Activated CD4-positive, alpha-beta memory T cell treated with anti-CD3 and anti-CD28 coated beads, Interleukin-2, amount 10 ng/mL, durations not matched to agents 7 days and 5 days (primary cell): ENCODE measurements at regions of chr12 and their contacts with region 1.

Region 1: DNA sequence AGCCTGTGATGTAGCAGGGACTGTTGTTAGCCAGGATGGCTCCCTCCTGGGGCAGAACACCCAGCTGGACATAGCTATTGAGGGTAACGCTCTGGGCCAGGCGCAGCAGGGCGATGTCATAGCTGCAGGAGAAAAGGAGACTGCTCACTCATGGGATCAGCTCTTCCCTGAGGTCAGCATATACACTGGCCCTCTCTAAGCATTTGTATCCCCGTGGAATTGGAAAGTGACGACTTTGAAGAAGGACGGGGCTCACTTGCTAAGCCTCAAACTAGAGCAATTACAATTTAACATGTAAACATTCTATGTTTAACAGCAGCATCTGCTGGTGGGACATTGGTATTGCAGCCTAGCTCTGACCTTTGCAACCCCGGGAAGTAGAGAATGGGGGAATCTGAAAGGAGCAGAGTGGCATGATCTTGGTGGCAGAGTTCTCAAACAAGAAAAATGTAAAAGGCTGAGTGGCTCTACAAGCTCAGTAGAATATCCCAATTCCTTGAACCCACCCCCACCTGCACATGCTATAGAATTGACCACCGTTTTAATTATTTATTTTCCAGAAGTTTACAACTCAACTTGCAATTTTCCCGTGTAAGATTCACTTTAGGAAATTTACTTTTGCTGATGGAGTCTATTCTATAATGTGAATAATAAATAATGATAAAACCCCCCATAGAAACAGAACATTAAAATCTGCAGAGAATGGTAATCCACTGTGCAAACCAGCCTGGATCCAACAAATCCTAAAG is 5.0 kb downstream of the CELA1 start:
- DNase-seq: peak; percentile 76
- H3K4me3 Mint-ChIP-seq: no peak overlapping the region
- H3K27ac Mint-ChIP-seq: no peak overlapping the region
- H3K4me1 Mint-ChIP-seq: peaks cover 11% of the 10 kb centered on the region
- H3K27me3 Mint-ChIP-seq: no peaks in the 10 kb centered on the region

Region 2: DNA sequence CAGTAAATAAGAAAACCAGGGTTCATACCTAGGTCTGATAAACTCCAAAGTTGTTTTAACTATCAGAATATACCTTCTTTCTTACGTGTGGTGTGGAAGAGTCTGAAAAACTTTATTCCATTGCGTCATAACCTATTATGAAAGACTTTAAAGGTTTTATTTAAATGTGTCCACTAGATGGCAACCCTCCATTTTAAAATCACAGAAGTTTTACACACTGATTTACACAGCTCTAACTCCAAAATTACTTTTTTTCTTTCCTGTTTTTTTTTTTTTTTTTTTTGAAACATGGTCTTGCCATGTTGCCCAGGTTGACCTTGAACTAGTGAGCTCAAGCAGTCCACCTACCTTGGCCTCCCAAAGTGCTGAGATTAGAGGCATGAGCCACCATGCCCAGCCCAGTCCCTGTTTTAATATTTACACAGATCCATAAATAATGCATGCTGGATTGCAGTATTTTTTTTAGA is 516.0 kb before region 1 on chr12:
- CTCF ChIA-PET with region 1: interaction called, 27 read pairs
- POLR2A ChIA-PET with region 1: no interaction called
- DNase-seq: no peak
- H3K4me3 Mint-ChIP-seq: no peak overlapping the region
- H3K27ac Mint-ChIP-seq: no peak overlapping the region
- H3K4me1 Mint-ChIP-seq: peaks cover 5% of the 10 kb centered on the region
- H3K27me3 Mint-ChIP-seq: no peaks in the 10 kb centered on the region

Region 3: GRCh38 chr12:51238510-51239334 is 102.7 kb before region 1 on chr12 and contains the start of gene DAZAP2:
- CTCF ChIA-PET with region 1: interaction called, 10 read pairs
- POLR2A ChIA-PET with region 1: interaction called, 9 read pairs
- DNase-seq: peak; percentile 97
- H3K4me3 Mint-ChIP-seq: peak within 1 kb of the TSS; percentile 93
- H3K27ac Mint-ChIP-seq: peak within 1 kb of the TSS; percentile 98
- H3K4me1 Mint-ChIP-seq: peaks cover 39% of the 10 kb centered on the region
- H3K27me3 Mint-ChIP-seq: peaks cover 4% of the 10 kb centered on the region
- total RNA-seq, gene DAZAP2: 247 TPM

Region 4: GRCh38 chr12:51270067-51270970 is 71.1 kb before region 1 on chr12 and contains the start of gene SMAGP:
- CTCF ChIA-PET with region 1: interaction called, 87 read pairs
- POLR2A ChIA-PET with region 1: interaction called, 15 read pairs
- DNase-seq: peak; percentile 47
- H3K4me3 Mint-ChIP-seq: peak within 1 kb of the TSS; percentile 86
- H3K27ac Mint-ChIP-seq: no peak within 1 kb of the TSS
- H3K4me1 Mint-ChIP-seq: peaks cover 25% of the 10 kb centered on the region
- H3K27me3 Mint-ChIP-seq: peaks cover 28% of the 10 kb centered on the region
- total RNA-seq, gene SMAGP: 1.8 to 3.1 TPM

Region 5: DNA sequence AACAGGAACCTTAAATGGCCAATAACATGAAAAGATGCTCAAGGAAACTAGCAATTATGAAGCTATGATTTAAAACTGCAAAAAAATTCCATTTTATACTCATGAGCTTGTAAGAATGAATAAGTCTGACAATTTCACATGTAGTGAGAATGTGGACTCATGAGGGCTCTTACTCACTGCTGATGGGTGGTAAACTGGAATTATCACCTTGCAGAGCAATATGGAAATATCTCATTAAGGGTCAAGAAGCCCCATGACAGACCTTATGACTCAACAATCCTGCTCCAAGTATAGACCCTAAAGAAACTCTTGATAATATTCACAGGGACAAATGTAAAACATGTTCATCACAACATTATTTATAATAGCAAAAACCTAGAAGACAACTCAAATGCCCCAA is 47.7 kb before region 1 on chr12:
- CTCF ChIA-PET with region 1: interaction called, 12 read pairs
- POLR2A ChIA-PET with region 1: no interaction called
- DNase-seq: no peak
- H3K4me3 Mint-ChIP-seq: no peak overlapping the region
- H3K27ac Mint-ChIP-seq: no peak overlapping the region
- H3K4me1 Mint-ChIP-seq: peaks cover 1% of the 10 kb centered on the region
- H3K27me3 Mint-ChIP-seq: no peaks in the 10 kb centered on the region

Region 6: GRCh38 chr12:51320695-51321320 is 20.6 kb before region 1 on chr12:
- CTCF ChIA-PET with region 1: interaction called, 44 read pairs
- POLR2A ChIA-PET with region 1: interaction called, 65 read pairs
- DNase-seq: no peak
- H3K4me3 Mint-ChIP-seq: peak overlapping the region; percentile 88
- H3K27ac Mint-ChIP-seq: peak overlapping the region; percentile 99
- H3K4me1 Mint-ChIP-seq: peaks cover 76% of the 10 kb centered on the region
- H3K27me3 Mint-ChIP-seq: no peaks in the 10 kb centered on the region

Region 7: DNA sequence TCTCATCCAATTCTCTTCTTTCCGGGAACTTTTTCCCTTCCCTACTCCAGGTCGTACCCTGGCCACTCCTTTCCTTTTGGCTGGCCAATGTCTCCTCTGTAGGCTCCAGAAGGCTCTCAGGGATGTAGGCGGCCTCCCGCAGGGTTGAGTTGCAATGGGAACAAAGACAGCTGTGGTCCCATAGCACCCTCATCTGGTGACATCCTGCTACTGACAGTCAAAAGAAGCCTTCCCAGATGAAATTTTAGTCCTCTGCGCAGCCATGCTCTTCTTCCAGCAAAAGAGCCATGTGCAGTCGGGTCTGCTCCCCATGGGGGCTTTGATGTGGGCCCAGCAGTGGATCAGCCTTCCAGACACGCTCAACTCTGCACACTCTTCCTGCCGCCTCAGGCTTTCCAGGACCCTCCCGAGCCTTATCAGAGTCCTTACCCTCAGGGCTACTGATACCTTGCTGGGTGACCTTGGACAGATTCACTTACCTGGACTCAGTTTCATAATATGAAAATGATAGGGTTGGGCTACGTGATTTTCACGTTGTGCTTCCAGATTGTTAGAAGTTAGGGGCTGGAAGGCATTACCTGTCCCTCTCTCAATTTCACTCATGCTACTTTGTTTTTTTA is 10.6 kb after region 1 on chr12:
- CTCF ChIA-PET with region 1: interaction called, 21 read pairs
- POLR2A ChIA-PET with region 1: interaction called, 3 read pairs
- DNase-seq: peak; percentile 56
- H3K4me3 Mint-ChIP-seq: no peak overlapping the region
- H3K27ac Mint-ChIP-seq: no peak overlapping the region
- H3K4me1 Mint-ChIP-seq: no peaks in the 10 kb centered on the region
- H3K27me3 Mint-ChIP-seq: no peaks in the 10 kb centered on the region

Region 8: GRCh38 chr12:51460519-51460918 is 119.1 kb after region 1 on chr12:
- CTCF ChIA-PET with region 1: no interaction called
- POLR2A ChIA-PET with region 1: no interaction called
- DNase-seq: no peak
- H3K4me3 Mint-ChIP-seq: no peak overlapping the region
- H3K27ac Mint-ChIP-seq: no peak overlapping the region
- H3K4me1 Mint-ChIP-seq: no peaks in the 10 kb centered on the region
- H3K27me3 Mint-ChIP-seq: no peaks in the 10 kb centered on the region